BJ (cell line): ENCODE measurements at regions of chr2 and their contacts with region 1.

Region 1: DNA sequence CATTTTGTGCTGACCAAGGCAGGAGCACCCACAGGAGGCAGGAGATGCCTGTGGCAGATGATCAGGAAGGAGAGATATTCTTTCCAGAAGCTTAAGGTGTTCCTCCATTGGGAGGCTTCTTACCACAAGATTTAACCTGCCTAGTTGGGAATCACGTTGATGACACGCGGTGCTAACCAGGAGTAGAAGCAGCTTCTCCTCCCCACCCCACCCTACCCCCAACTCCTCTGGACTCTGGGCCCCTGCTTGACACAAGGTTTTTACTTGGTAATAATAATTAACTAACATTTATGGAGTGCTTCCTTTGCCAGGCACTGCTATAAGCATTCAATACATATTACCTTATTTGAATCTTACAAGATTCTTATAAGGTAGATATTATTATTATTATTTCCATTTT is 62.5 kb upstream of the PAPOLG start:
- DNase-seq: no peak
- H3K4me3 ChIP-seq: no peak overlapping the region
- H3K27me3 ChIP-seq: no peaks in the 10 kb centered on the region
- CTCF ChIP-seq: no peak

Region 2: DNA sequence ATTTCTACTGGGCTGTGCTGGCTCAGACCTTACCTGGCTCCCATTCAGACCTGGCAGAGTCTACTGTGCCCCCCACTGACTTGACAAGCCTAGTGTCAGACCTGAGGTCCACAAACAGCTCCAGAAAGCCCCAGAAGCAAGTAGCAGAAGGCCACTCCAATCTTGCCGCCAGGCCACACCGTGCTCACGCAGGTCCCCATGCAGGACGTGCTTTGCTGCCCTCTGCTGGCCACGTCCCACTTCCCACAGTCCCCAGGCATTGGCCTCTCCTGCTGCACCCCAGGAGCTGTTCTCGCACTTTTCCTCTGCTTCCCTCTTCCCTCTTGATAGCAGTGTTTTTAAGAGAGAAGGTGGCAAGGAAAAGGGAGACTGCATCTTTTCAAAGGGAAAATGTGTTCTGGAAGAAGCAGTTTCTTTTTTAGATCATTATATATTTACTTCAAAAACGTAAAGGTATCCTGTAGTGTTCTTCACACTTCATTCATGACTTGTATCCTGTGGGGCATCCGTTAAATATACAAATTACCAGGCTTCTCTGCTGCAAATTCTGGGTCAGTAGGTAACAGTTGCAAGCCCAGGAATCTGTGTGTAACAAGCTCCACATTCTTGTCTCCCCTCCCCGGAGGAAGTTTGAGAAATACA is 18.9 kb before region 1 on chr2:
- CTCF ChIA-PET with region 1: interaction called, 10 read pairs
- POLR2A ChIA-PET with region 1: no interaction called
- DNase-seq: peak; percentile 1
- H3K4me3 ChIP-seq: no peak overlapping the region
- H3K27me3 ChIP-seq: no peaks in the 10 kb centered on the region; the same call in 1 of the 2 replicates
- CTCF ChIP-seq: peak; percentile 99